ENCODE measurements at regions of chr15 and their contacts with region 1.

Region 1: GRCh38 chr15:82952158-82953081 is at the start of gene HOMER2:
- DNase-seq: peak; percentile 25 to 58
- ATAC-seq: peak; percentile 74 to 77
- H3K4me3 ChIP-seq: peak within 1 kb of the TSS; percentile 62 to 75 (median 63)
- H3K27ac ChIP-seq: peak within 1 kb of the TSS; percentile 91 to 95 (median 92)
- H3K4me1 ChIP-seq: peaks cover 12 to 39% of the 10 kb centered on the region in 2 donors
- H3K27me3 ChIP-seq: no peaks in the 10 kb centered on the region
- CTCF ChIP-seq: peak in 1 of 5 experiments; percentile 7
- POLR2A ChIP-seq: peak; percentile 57 to 76
- total RNA-seq, gene HOMER2: 51.6 to 132 (median 94.5) TPM

Region 2: GRCh38 chr15:82663186-82663600 is 289.2 kb before region 1 on chr15:
- in situ Hi-C with region 1: no loop called
- intact Hi-C with region 1: no loop called
- DNase-seq: no peak
- ATAC-seq: no peak
- H3K4me3 ChIP-seq: no peak overlapping the region
- H3K27ac ChIP-seq: no peak overlapping the region
- H3K4me1 ChIP-seq: no peaks in the 10 kb centered on the region
- H3K27me3 ChIP-seq: no peaks in the 10 kb centered on the region
- CTCF ChIP-seq: no peak
- POLR2A ChIP-seq: no peak

Region 3: GRCh38 chr15:82768428-82769081 is 183.9 kb before region 1 on chr15:
- in situ Hi-C with region 1: no loop called
- intact Hi-C with region 1: loop called (anchors 5 kb)
- DNase-seq: peak; percentile 85 to 88
- ATAC-seq: peak; percentile 76 to 87
- H3K4me3 ChIP-seq: no peak overlapping the region
- H3K27ac ChIP-seq: peak overlapping the region; percentile 88 to 96 (median 92)
- H3K4me1 ChIP-seq: peaks cover 46 to 62% of the 10 kb centered on the region in 2 donors
- H3K27me3 ChIP-seq: no peaks in the 10 kb centered on the region
- CTCF ChIP-seq: no peak
- POLR2A ChIP-seq: peak; percentile 40 to 47

Region 4: GRCh38 chr15:83108266-83109226 is 156.1 kb after region 1 on chr15:
- in situ Hi-C with region 1: no loop called
- intact Hi-C with region 1: no loop called
- DNase-seq: peak; percentile 46 to 57
- ATAC-seq: peak; percentile 26 to 30
- H3K4me3 ChIP-seq: peak overlapping the region; percentile 64 to 88 (median 76)
- H3K27ac ChIP-seq: peak overlapping the region; percentile 80 to 91 (median 88)
- H3K4me1 ChIP-seq: peaks cover 34 to 35% of the 10 kb centered on the region in 2 donors
- H3K27me3 ChIP-seq: no peaks in the 10 kb centered on the region
- CTCF ChIP-seq: no peak
- POLR2A ChIP-seq: peak in 1 of 2 donors; percentile 33